Activated CD8-positive, alpha-beta T cell treated with anti-CD3 and anti-CD28 coated beads for 36 hours (primary cell): ENCODE measurements at regions of chr7 and their contacts with region 1.

Region 1: GRCh38 chr7:22110227-22110839 is 164.6 kb upstream of the CDCA7L start:
- DNase-seq: peak; percentile 80
- ATAC-seq: peak; percentile 65
- H3K4me3 Mint-ChIP-seq: no peak overlapping the region
- H3K27ac Mint-ChIP-seq: no peak overlapping the region
- H3K4me1 Mint-ChIP-seq: no peaks in the 10 kb centered on the region
- H3K27me3 Mint-ChIP-seq: peaks cover 1% of the 10 kb centered on the region
- CTCF ChIP-seq: peak; percentile 74

Region 2: DNA sequence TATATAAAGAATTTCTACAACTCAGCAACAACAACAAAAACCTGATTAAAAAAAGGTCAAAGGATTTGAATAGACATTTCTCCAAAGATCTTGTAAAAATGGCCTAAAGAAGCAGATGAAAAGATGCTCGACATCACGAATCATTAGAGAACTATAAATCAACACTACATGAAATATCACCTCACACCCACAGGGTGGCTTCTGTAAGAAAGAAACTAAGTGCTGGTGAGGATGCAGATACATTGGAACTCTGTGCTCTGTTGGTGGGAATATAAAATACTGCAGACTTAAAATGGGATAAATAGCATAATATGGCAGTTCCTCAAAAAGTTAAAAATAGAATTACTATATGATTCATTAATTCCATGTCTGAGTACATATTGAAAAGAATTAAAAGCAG is 126.3 kb before region 1 on chr7:
- CTCF ChIA-PET with region 1: no interaction called
- POLR2A ChIA-PET with region 1: no interaction called
- intact Hi-C with region 1: no loop called
- DNase-seq: no peak
- ATAC-seq: no peak
- H3K4me3 Mint-ChIP-seq: no peak overlapping the region
- H3K27ac Mint-ChIP-seq: no peak overlapping the region
- H3K4me1 Mint-ChIP-seq: no peaks in the 10 kb centered on the region
- H3K27me3 Mint-ChIP-seq: no peaks in the 10 kb centered on the region
- CTCF ChIP-seq: no peak

Region 3: DNA sequence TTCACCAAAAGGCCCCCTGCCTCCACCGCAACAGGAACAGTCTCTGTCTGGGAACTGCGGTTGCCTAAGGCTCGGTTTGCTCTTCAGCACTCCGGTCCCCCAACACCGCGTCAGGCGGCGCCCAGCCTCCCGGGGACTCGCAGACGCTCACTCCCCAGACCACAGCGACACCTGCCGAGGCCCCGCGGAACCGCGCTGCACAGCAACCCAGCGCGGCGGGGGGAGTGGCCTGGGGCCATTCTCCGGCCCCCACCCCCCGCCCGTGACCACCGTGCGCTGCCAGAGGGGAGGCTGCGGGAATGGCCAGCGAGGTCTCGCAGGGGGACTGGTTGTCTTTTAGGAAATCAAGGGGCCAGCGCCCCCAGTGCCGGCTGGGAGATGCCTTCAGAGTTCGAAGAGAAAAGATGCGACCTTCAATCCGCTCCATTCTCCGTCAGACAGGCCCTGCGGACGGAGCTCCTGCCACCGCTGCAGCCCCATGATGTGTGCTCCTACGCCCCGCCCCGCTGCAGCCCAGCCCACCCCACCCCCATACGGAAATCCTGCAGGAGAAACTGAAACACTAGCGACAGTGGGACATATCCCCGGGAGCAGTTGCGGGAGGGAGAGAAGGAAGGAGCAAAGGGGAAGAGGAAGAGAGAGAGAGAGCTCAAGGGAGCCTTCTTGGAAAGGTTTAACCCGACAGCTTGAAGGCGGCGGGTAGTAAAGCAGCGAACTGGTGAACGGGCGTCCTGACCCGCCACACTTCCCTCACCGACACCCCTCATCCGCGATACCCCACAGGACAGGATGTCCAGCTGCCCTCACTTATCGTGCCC is 27.2 kb before region 1 on chr7:
- CTCF ChIA-PET with region 1: interaction called, 12 read pairs
- POLR2A ChIA-PET with region 1: no interaction called
- intact Hi-C with region 1: no loop called
- DNase-seq: peak; percentile 84
- ATAC-seq: peak; percentile 99
- H3K4me3 Mint-ChIP-seq: peak overlapping the region; percentile 66
- H3K27ac Mint-ChIP-seq: no peak overlapping the region
- H3K4me1 Mint-ChIP-seq: peaks cover 8% of the 10 kb centered on the region
- H3K27me3 Mint-ChIP-seq: peaks cover 17% of the 10 kb centered on the region
- CTCF ChIP-seq: peak; percentile 96

Region 4: GRCh38 chr7:22121702-22122474 is 11.6 kb after region 1 on chr7:
- CTCF ChIA-PET with region 1: interaction called, 22 read pairs
- POLR2A ChIA-PET with region 1: no interaction called
- intact Hi-C with region 1: no loop called
- DNase-seq: no peak
- ATAC-seq: peak; percentile 27
- H3K4me3 Mint-ChIP-seq: no peak overlapping the region
- H3K27ac Mint-ChIP-seq: no peak overlapping the region
- H3K4me1 Mint-ChIP-seq: peaks cover 9% of the 10 kb centered on the region
- H3K27me3 Mint-ChIP-seq: no peaks in the 10 kb centered on the region
- CTCF ChIP-seq: no peak

Region 5: DNA sequence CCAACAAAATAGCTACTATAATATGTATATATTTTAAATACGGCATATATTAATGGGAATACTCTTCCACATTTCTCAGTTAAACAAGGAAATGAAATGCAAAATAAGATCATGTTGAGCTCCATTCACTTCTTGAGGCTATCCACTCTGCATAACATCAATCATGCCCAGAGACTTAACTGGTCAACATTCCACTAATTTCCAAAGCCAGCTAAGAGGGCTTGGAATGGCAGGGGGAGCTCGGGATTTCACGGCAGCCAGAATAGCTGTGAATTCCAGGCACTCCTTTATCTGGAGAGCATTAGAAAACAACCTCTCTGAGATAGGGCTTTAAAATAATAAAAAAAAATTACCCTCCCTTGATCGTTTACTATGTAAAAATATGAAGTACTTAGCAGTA is 30.2 kb after region 1 on chr7:
- CTCF ChIA-PET with region 1: interaction called, 14 read pairs
- POLR2A ChIA-PET with region 1: no interaction called
- intact Hi-C with region 1: no loop called
- DNase-seq: no peak
- ATAC-seq: no peak
- H3K4me3 Mint-ChIP-seq: no peak overlapping the region
- H3K27ac Mint-ChIP-seq: no peak overlapping the region
- H3K4me1 Mint-ChIP-seq: no peaks in the 10 kb centered on the region
- H3K27me3 Mint-ChIP-seq: no peaks in the 10 kb centered on the region
- CTCF ChIP-seq: no peak

Region 6: DNA sequence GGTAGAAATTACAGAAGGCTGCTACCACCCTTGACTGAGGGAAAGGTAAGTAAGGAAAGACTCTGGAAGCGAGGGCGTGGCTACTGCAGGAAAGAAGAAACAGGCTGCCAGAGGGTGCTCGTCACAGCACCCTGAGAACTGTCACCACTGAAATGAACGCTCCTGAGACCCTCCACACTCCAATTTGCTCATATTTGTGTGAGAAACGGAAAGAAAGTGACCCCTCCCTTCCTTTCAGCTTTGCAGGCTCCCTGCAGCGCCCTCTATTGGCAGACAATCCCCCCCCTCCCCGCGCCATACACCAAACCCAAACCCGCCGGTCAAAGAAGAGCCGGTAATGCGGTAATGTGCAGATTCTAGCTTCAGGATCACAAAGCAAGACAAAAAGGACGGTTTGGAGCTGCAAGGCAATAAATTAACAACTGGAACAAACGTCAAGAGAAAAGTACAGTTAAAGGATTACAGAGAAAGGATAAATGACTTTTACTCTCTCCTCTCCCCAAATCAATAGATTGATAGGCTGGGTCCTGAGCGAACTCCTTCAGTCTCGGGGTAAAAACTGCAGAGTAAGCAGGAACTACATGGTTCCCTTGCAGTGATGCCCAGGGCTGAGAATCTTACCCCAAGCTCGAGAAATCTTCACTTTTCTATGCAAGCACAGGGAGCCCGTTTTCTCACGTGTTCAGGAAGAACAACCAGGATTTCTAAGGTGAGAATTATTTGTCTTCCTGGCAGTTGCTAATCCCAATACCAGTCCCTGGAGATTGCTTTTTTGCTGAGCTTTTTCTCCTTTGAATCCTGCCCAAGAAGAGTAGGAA is 342.0 kb after region 1 on chr7:
- CTCF ChIA-PET with region 1: interaction called, 14 read pairs
- POLR2A ChIA-PET with region 1: no interaction called
- intact Hi-C with region 1: no loop called
- DNase-seq: peak; percentile 74
- ATAC-seq: peak; percentile 49
- H3K4me3 Mint-ChIP-seq: no peak overlapping the region
- H3K27ac Mint-ChIP-seq: no peak overlapping the region
- H3K4me1 Mint-ChIP-seq: peaks cover 8% of the 10 kb centered on the region
- H3K27me3 Mint-ChIP-seq: peaks cover 38% of the 10 kb centered on the region
- CTCF ChIP-seq: peak; percentile 74

Region 7: GRCh38 chr7:22488643-22489462 is 378.5 kb after region 1 on chr7:
- CTCF ChIA-PET with region 1: interaction called, 58 read pairs
- POLR2A ChIA-PET with region 1: no interaction called
- intact Hi-C with region 1: loop called (anchors 1 kb)
- DNase-seq: peak; percentile 73
- ATAC-seq: peak; percentile 66
- H3K4me3 Mint-ChIP-seq: no peak overlapping the region
- H3K27ac Mint-ChIP-seq: no peak overlapping the region
- H3K4me1 Mint-ChIP-seq: no peaks in the 10 kb centered on the region
- H3K27me3 Mint-ChIP-seq: peaks cover 4% of the 10 kb centered on the region
- CTCF ChIP-seq: peak; percentile 94